ENCODE measurements at regions of chr14 and their contacts with region 1.

Region 1: GRCh38 chr14:22047115-22047514 is 373.5 kb upstream of the OR4E1 start:
- DNase-seq: peak; percentile 53
- H3K4me3 Mint-ChIP-seq: peak overlapping the region; percentile 33
- H3K27ac Mint-ChIP-seq: peak overlapping the region; percentile 87
- H3K4me1 Mint-ChIP-seq: peaks cover 52% of the 10 kb centered on the region
- H3K27me3 Mint-ChIP-seq: peaks cover 7% of the 10 kb centered on the region

Region 2: GRCh38 chr14:22070119-22071011 is 23.2 kb after region 1 on chr14:
- CTCF ChIA-PET with region 1: interaction called, 14 read pairs
- DNase-seq: peak; percentile 75
- H3K4me3 Mint-ChIP-seq: peak overlapping the region; percentile 92
- H3K27ac Mint-ChIP-seq: peak overlapping the region; percentile 98
- H3K4me1 Mint-ChIP-seq: peaks cover 53% of the 10 kb centered on the region
- H3K27me3 Mint-ChIP-seq: no peaks in the 10 kb centered on the region

Measured in activated naive CD4-positive, alpha-beta T cell treated with anti-CD3 and anti-CD28 coated beads, Interleukin-2, amount 10 ng/mL, durations not matched to agents 7 days and 5 days (primary cell).